CD8-positive, alpha-beta T cell (primary cell): ENCODE measurements at regions of chr1 and their contacts with region 1.

Region 1: DNA sequence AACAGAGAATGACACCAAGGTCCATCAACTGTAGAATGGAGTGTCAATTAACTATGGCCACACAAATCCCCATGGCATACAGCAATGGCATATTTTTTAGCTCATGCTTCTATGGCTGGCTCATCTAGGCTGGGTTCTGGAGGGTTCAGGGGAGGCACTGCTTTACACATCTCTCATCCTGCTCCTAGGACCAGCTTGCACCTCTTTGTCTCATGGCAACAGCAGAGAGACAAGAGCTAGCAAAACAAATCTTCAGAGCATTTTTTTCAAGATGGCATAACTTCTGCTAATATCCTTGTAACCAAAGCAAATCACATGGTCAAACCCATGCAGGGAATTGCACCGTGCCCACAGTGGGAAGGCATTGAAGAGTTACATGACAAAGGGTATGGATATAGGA is 82.4 kb downstream of the KIF14 start:
- DNase-seq: no peak
- ATAC-seq: no peak
- H3K4me3 ChIP-seq: no peak overlapping the region
- H3K4me3 Mint-ChIP-seq: no peak overlapping the region
- H3K27ac ChIP-seq: no peak overlapping the region
- H3K27ac Mint-ChIP-seq: no peak overlapping the region
- H3K4me1 ChIP-seq: no peaks in the 10 kb centered on the region
- H3K4me1 Mint-ChIP-seq: no peaks in the 10 kb centered on the region
- H3K27me3 ChIP-seq: peaks cover 0 to 2% of the 10 kb centered on the region in 2 experiments
- H3K27me3 Mint-ChIP-seq: no peaks in the 10 kb centered on the region
- CTCF ChIP-seq: no peak

Region 2: GRCh38 chr1:199399996-199400724 is 1138.0 kb before region 1 on chr1:
- CTCF ChIA-PET with region 1: no interaction called
- POLR2A ChIA-PET with region 1: no interaction called
- intact Hi-C with region 1: no loop called
- DNase-seq: no peak
- ATAC-seq: no peak
- H3K4me3 ChIP-seq: no peak overlapping the region
- H3K4me3 Mint-ChIP-seq: no peak overlapping the region
- H3K27ac ChIP-seq: no peak overlapping the region
- H3K27ac Mint-ChIP-seq: no peak overlapping the region
- H3K4me1 ChIP-seq: no peaks in the 10 kb centered on the region
- H3K4me1 Mint-ChIP-seq: no peaks in the 10 kb centered on the region
- H3K27me3 ChIP-seq: no peaks in the 10 kb centered on the region
- H3K27me3 Mint-ChIP-seq: peaks cover 3% of the 10 kb centered on the region
- CTCF ChIP-seq: no peak

Region 3: GRCh38 chr1:200558866-200559459 is 20.8 kb after region 1 on chr1:
- CTCF ChIA-PET with region 1: interaction called, 11 read pairs
- POLR2A ChIA-PET with region 1: no interaction called
- intact Hi-C with region 1: no loop called
- DNase-seq: peak in 2 of 9 experiments; percentile 40 to 58
- ATAC-seq: no peak
- H3K4me3 ChIP-seq: no peak overlapping the region
- H3K4me3 Mint-ChIP-seq: no peak overlapping the region
- H3K27ac ChIP-seq: no peak overlapping the region
- H3K27ac Mint-ChIP-seq: no peak overlapping the region
- H3K4me1 ChIP-seq: no peaks in the 10 kb centered on the region
- H3K4me1 Mint-ChIP-seq: no peaks in the 10 kb centered on the region
- H3K27me3 ChIP-seq: no peaks in the 10 kb centered on the region
- H3K27me3 Mint-ChIP-seq: no peaks in the 10 kb centered on the region
- CTCF ChIP-seq: peak; percentile 58

Region 4: GRCh38 chr1:200837931-200838571 is 299.9 kb after region 1 on chr1:
- CTCF ChIA-PET with region 1: no interaction called
- POLR2A ChIA-PET with region 1: no interaction called
- intact Hi-C with region 1: no loop called
- DNase-seq: peak in 1 of 9 experiments; percentile 3
- ATAC-seq: no peak
- H3K4me3 ChIP-seq: no peak overlapping the region
- H3K4me3 Mint-ChIP-seq: no peak overlapping the region
- H3K27ac ChIP-seq: no peak overlapping the region
- H3K27ac Mint-ChIP-seq: no peak overlapping the region
- H3K4me1 ChIP-seq: no peaks in the 10 kb centered on the region
- H3K4me1 Mint-ChIP-seq: no peaks in the 10 kb centered on the region
- H3K27me3 ChIP-seq: no peaks in the 10 kb centered on the region
- H3K27me3 Mint-ChIP-seq: no peaks in the 10 kb centered on the region
- CTCF ChIP-seq: no peak